MCF 10A (cell line): ENCODE measurements at regions of chr13 and their contacts with region 1.

Region 1: DNA sequence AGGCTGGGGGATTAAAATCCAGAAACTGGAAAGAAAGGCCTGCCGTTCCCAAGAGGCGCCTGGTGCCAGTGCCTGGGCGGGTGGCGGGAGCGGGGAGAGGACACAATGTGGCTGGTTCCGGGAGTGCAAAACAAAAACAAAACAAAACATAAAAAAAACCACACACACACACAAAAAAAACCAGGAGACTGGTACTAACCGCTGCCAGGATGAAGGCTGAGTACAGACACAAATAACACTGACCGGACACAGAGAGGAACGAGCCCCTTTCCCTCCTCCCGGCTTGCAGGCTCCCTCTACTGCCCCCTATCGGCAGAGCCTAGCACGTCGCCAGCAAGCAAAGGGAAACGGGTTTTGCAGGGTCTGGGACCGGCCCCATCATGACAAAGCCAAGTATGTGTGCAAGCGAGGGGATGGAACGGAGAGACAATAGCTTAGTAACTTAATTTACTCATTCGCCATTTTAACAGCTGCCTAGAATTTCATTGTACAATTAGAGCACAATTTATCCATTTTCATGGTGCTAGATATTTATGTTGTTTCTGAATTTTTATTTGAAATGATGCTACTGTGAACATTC is 17.9 kb upstream of the ZDHHC20 start:
- DNase-seq: peak; percentile 79
- H3K4me3 Mint-ChIP-seq: peak overlapping the region; percentile 75
- H3K27ac Mint-ChIP-seq: peak overlapping the region; percentile 52
- H3K4me1 Mint-ChIP-seq: peaks cover 16% of the 10 kb centered on the region
- H3K27me3 Mint-ChIP-seq: no peaks in the 10 kb centered on the region
- CTCF ChIP-seq: peak; percentile 87

Region 2: DNA sequence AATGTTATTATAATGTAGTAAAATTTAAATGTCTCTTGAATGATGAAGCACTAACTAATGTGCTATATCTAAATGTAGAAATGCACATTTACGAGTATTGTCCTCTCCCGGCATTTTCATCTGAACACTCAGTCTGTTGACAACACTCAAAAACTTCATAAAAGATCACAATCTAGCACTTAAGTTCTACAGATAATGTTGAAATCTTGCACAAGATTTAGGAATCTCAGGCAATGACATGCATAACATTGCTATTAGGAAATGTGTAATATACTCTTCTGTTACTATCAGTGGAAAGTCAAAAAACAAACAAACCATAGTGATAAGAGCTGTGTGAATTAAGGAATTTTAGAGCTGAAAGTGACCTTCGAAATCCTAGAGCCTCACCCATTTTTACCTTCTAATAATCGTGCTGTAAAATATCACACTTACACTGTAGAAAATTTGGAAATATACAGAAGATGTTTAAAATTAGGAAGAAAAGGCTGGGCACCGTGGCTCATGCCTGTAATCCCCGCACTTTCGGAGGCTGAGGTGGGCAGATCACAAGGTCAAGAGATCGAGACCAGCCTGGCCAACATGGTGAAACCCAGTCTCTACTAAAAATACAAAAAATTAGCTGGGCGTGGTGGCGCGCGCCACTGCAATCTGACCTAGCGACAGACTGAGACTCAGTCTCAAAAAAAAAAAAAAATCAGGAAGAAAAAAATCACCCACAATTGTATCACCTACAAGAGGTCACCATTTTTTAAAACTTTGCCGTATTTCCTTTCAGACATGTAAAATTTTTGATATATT is 536.7 kb before region 1 on chr13:
- CTCF ChIA-PET with region 1: interaction called, 23 read pairs
- POLR2A ChIA-PET with region 1: interaction called, 3 read pairs
- intact Hi-C with region 1: loop called (anchors 1 kb)
- DNase-seq: no peak
- H3K4me3 Mint-ChIP-seq: no peak overlapping the region
- H3K27ac Mint-ChIP-seq: peak overlapping the region; percentile 63
- H3K4me1 Mint-ChIP-seq: peaks cover 12% of the 10 kb centered on the region
- H3K27me3 Mint-ChIP-seq: no peaks in the 10 kb centered on the region
- CTCF ChIP-seq: no peak

Region 3: GRCh38 chr13:21176220-21176982 is 300.6 kb before region 1 on chr13 and contains the starts of genes MRPL57 and SKA3:
- CTCF ChIA-PET with region 1: interaction called, 12 read pairs
- POLR2A ChIA-PET with region 1: interaction called, 4 read pairs
- intact Hi-C with region 1: loop called (anchors 5 kb)
- DNase-seq: peak; percentile 92
- H3K4me3 Mint-ChIP-seq: peak within 1 kb of the TSS; percentile 99
- H3K27ac Mint-ChIP-seq: peak within 1 kb of the TSS; percentile 90
- H3K4me1 Mint-ChIP-seq: no peaks in the 10 kb centered on the region
- H3K27me3 Mint-ChIP-seq: no peaks in the 10 kb centered on the region
- CTCF ChIP-seq: no peak
- total RNA-seq, gene MRPL57: 16.8 and 20.8 TPM in 2 replicates
- total RNA-seq, gene SKA3: 5.9 and 16.4 TPM in 2 replicates

Region 4: GRCh38 chr13:21291845-21292244 is 185.1 kb before region 1 on chr13:
- CTCF ChIA-PET with region 1: interaction called, 92 read pairs
- POLR2A ChIA-PET with region 1: interaction called, 33 read pairs
- intact Hi-C with region 1: loop called (anchors 1 kb)
- DNase-seq: no peak
- H3K4me3 Mint-ChIP-seq: no peak overlapping the region
- H3K27ac Mint-ChIP-seq: no peak overlapping the region
- H3K4me1 Mint-ChIP-seq: no peaks in the 10 kb centered on the region
- H3K27me3 Mint-ChIP-seq: no peaks in the 10 kb centered on the region
- CTCF ChIP-seq: no peak

Region 5: GRCh38 chr13:21310221-21310620 is 166.8 kb before region 1 on chr13:
- CTCF ChIA-PET with region 1: interaction called, 19 read pairs
- POLR2A ChIA-PET with region 1: no interaction called
- intact Hi-C with region 1: no loop called
- DNase-seq: peak; percentile 92
- H3K4me3 Mint-ChIP-seq: no peak overlapping the region
- H3K27ac Mint-ChIP-seq: peak overlapping the region; percentile 55
- H3K4me1 Mint-ChIP-seq: peaks cover 10% of the 10 kb centered on the region
- H3K27me3 Mint-ChIP-seq: no peaks in the 10 kb centered on the region
- CTCF ChIP-seq: no peak

Region 6: DNA sequence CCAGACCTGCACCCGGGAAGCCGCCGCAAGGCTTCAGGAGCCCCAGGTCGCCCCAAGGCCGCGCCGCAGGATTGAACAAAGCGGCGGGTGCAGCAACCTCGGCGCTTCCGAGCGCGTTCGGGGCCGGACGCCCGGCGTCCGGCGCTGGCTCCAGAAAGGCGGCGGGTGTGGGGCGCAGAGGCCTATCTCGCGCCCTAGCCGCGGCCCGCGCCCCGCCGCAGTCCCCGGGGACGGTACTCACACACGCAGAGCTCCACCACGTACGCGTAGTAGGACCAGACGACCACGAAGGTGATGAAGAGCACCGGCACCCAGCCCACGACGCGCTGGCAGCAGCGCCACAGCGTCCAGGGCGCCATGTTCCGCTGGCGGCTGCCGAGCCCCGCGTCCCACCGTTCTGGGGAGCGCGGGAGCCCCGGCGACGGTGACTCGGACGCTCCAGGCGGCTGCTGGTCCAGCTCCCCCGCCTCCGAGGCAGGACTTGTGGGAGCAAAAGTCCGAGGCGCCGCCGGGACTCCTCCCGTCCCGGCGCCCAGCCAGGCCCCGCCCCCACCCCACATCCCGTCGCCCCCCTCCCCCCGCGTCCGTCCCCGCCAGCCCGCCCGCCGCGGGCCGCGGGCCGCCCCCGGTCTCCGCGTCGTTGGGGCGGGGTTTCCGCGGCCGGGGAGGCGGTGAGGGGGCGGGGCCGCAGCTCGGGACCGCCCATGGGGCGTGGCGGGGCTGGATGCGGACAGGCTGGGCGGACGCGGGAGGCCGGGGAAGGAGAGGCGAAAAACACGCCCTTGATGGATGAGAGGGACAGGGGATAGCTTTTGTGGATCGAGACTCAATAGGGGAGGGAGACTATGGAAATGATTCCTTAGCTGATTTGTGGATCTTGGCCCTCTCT is 17.9 kb before region 1 on chr13 and contains the start of gene ZDHHC20:
- CTCF ChIA-PET with region 1: interaction called, 29 read pairs
- POLR2A ChIA-PET with region 1: interaction called, 3 read pairs
- intact Hi-C with region 1: no loop called
- DNase-seq: peak; percentile 84
- H3K4me3 Mint-ChIP-seq: peak within 1 kb of the TSS; percentile 88
- H3K27ac Mint-ChIP-seq: peak within 1 kb of the TSS; percentile 75
- H3K4me1 Mint-ChIP-seq: peaks cover 22% of the 10 kb centered on the region
- H3K27me3 Mint-ChIP-seq: no peaks in the 10 kb centered on the region
- CTCF ChIP-seq: no peak
- total RNA-seq, gene ZDHHC20: 33.5 and 42.2 TPM in 2 replicates

Region 7: DNA sequence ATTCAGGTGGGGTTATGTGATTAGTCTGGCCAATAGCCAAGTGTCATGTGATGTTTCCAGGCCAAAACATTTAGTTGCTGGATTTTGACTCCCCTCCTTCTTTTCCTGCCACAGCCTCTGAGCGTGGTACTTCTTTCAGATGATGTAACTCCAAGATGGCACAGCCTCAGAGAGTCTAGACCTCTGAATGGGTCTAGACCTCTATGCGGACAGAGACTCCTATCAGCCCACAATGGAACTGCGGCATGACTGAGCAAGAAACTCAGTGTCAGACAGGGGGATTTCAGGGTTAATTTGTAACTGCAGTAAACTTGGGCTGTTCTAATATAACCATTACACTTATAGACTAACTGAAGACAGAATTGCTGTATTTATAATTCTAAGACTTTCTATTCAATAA is 24.7 kb after region 1 on chr13:
- CTCF ChIA-PET with region 1: interaction called, 12 read pairs
- POLR2A ChIA-PET with region 1: no interaction called
- intact Hi-C with region 1: no loop called
- DNase-seq: no peak
- H3K4me3 Mint-ChIP-seq: no peak overlapping the region
- H3K27ac Mint-ChIP-seq: no peak overlapping the region
- H3K4me1 Mint-ChIP-seq: no peaks in the 10 kb centered on the region
- H3K27me3 Mint-ChIP-seq: no peaks in the 10 kb centered on the region
- CTCF ChIP-seq: no peak

Region 8: GRCh38 chr13:21638319-21639282 is 161.6 kb after region 1 on chr13:
- CTCF ChIA-PET with region 1: no interaction called
- POLR2A ChIA-PET with region 1: no interaction called
- intact Hi-C with region 1: no loop called
- DNase-seq: peak; percentile 52
- H3K4me3 Mint-ChIP-seq: no peak overlapping the region
- H3K27ac Mint-ChIP-seq: peak overlapping the region; percentile 47
- H3K4me1 Mint-ChIP-seq: peaks cover 20% of the 10 kb centered on the region
- H3K27me3 Mint-ChIP-seq: no peaks in the 10 kb centered on the region
- CTCF ChIP-seq: peak; percentile 62